Natural killer cell (primary cell): ENCODE measurements at regions of chr17 and their contacts with region 1.

Region 1: DNA sequence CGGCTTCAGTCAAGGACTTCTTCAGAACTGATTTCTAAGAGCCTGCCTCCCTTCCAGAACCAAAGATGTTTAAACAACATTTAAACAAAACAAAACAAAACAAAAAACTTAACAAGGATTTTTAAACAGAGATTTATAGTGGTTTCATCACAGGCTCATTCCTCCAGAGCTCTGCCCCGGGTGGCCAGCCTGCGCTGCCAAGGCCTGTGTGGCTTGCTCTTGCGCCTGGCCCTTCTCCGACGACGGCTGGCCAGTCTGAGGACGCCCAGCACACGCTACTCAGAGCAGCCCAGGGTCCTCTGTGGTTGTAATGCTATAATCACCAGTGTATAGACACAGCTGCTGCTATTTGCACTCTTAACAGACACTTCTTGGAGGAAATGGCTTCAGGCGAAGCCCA is 307.2 kb upstream of the MYOCD start:
- DNase-seq: no peak
- ATAC-seq: no peak
- H3K4me3 ChIP-seq: no peak overlapping the region
- H3K4me3 Mint-ChIP-seq: no peak overlapping the region
- H3K27ac ChIP-seq: no peak overlapping the region
- H3K27ac Mint-ChIP-seq: no peak overlapping the region
- H3K4me1 ChIP-seq: no peaks in the 10 kb centered on the region
- H3K4me1 Mint-ChIP-seq: no peaks in the 10 kb centered on the region
- H3K27me3 ChIP-seq: no peaks in the 10 kb centered on the region
- H3K27me3 Mint-ChIP-seq: peaks cover 0 to 2% of the 10 kb centered on the region in 2 donors
- CTCF ChIP-seq: no peak

Region 2: DNA sequence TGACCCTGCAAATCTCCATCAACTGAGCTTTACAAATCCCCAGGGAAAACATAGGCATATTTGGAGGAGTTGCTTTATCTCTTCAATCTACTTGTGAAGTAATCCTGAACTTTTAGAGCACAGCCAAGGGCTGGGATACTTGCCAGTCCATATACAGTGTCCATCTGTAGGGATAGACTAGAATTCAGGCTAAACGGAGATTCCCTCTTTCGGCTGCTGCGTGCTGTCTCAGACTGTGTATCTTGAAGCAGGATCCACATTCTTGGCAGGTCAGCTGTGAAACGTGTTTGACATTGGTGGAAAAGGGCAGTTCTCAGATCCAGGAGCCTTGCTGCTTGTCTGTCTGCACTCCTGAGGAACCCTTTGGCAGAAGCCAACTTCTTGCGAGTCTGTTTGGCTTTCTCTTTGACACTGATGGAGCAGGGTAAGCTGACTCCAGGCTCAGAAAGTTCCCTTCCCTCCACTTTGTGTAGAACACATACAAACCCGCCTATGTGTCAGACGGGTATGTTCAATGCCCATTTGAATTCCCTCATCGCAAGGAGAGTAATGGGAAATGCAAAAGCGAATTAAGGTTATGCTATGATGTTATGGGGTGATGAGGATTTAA is 116.0 kb before region 1 on chr17:
- intact Hi-C with region 1: no loop called
- DNase-seq: no peak
- ATAC-seq: no peak
- H3K4me3 ChIP-seq: no peak overlapping the region
- H3K4me3 Mint-ChIP-seq: no peak overlapping the region
- H3K27ac ChIP-seq: no peak overlapping the region
- H3K27ac Mint-ChIP-seq: no peak overlapping the region
- H3K4me1 ChIP-seq: no peaks in the 10 kb centered on the region
- H3K4me1 Mint-ChIP-seq: no peaks in the 10 kb centered on the region
- H3K27me3 ChIP-seq: no peaks in the 10 kb centered on the region
- H3K27me3 Mint-ChIP-seq: no peaks in the 10 kb centered on the region
- CTCF ChIP-seq: no peak

Region 3: DNA sequence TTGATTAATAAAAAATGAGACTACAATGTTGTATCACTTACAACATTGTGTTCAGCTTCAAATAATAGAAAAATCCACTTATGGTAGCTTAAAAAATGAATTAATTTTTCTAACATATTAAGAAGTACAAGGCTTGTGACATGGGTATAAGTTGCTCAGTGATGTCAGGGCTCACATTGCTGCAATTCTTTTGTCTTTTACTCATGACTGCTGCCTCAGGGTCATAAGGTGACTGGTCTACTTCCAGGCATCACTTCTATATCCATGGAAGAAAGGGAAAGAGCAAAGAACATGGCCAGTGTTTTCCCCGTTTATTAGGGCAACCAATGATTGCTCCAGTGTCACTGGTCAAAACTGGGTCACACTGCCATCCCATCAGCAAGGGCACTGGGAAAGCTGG is 42.5 kb before region 1 on chr17:
- intact Hi-C with region 1: no loop called
- DNase-seq: no peak
- ATAC-seq: no peak
- H3K4me3 ChIP-seq: no peak overlapping the region
- H3K4me3 Mint-ChIP-seq: no peak overlapping the region
- H3K27ac ChIP-seq: no peak overlapping the region
- H3K27ac Mint-ChIP-seq: no peak overlapping the region
- H3K4me1 ChIP-seq: no peaks in the 10 kb centered on the region
- H3K4me1 Mint-ChIP-seq: no peaks in the 10 kb centered on the region
- H3K27me3 ChIP-seq: no peaks in the 10 kb centered on the region
- H3K27me3 Mint-ChIP-seq: no peaks in the 10 kb centered on the region
- CTCF ChIP-seq: no peak

Region 4: DNA sequence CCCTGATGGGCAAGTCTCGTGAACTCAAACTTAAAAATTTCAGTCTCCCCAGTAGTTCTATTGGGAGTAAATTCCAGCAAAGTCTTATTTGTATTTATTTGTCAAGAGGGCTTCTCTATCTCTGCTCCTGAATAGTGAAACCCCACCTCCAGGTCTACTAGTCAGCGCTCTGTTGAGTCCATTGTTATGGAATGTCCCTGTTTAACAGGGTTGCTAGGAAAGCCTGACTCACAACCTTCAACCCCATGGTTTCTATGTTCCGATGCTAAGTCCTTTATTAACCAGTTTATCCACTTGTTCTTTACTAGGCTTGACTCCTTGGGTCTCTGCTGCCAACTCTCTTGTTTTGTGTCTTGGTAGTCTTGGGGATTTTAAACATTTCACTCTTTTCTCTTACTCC is 56.6 kb after region 1 on chr17:
- intact Hi-C with region 1: loop called (anchors 10 kb)
- DNase-seq: no peak
- ATAC-seq: no peak
- H3K4me3 ChIP-seq: no peak overlapping the region
- H3K4me3 Mint-ChIP-seq: no peak overlapping the region
- H3K27ac ChIP-seq: no peak overlapping the region
- H3K27ac Mint-ChIP-seq: no peak overlapping the region
- H3K4me1 ChIP-seq: no peaks in the 10 kb centered on the region
- H3K4me1 Mint-ChIP-seq: no peaks in the 10 kb centered on the region
- H3K27me3 ChIP-seq: no peaks in the 10 kb centered on the region
- H3K27me3 Mint-ChIP-seq: no peaks in the 10 kb centered on the region
- CTCF ChIP-seq: no peak